Naive thymus-derived CD4-positive, alpha-beta T cell (primary cell): ENCODE measurements at regions of chr2 and their contacts with region 1.

Region 1: DNA sequence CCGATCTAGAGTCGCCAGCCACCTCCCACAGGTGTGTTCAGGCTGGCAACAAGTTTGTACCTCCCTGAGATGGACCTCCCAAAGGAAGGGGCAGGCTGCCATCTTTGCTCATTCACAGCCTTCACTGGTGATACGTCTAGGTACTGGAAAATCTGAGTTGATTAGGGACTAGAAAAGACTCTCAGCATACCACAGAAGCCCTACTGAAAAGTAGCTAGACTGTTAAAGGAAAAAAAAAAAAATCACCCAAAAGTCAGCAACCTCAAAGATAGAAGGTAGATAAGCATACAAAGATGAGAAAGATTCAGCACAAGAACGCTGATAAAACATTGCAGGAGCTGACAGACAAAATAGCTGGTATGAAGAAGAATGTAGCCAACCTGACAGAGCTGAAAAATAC is 128.6 kb upstream of the WDR75 start:
- DNase-seq: peak in 3 of 9 donors; percentile 22 to 48 (median 39)
- ATAC-seq: peak; percentile 36
- H3K4me3 ChIP-seq: no peak overlapping the region
- H3K4me3 Mint-ChIP-seq: peak overlapping the region in 9 of 10 donors; percentile 36 to 75 (median 63)
- H3K27ac ChIP-seq: no peak overlapping the region
- H3K27ac Mint-ChIP-seq: peak overlapping the region; percentile 14 to 87 (median 74)
- H3K4me1 ChIP-seq: peaks cover 4 to 37% of the 10 kb centered on the region in 2 donors
- H3K4me1 Mint-ChIP-seq: peaks cover 10 to 75% (median 58%) of the 10 kb centered on the region in 7 donors
- H3K27me3 ChIP-seq: no peaks in the 10 kb centered on the region
- H3K27me3 Mint-ChIP-seq: no peaks in the 10 kb centered on the region

Region 2: GRCh38 chr2:189302274-189302948 is 10.2 kb before region 1 on chr2:
- CTCF ChIA-PET with region 1: interaction called, 3 read pairs
- POLR2A ChIA-PET with region 1: interaction called, 3 read pairs
- intact Hi-C with region 1: loop called in 1 of 2 experiments (anchors 1 kb)
- DNase-seq: no peak
- ATAC-seq: no peak
- H3K4me3 ChIP-seq: no peak overlapping the region
- H3K4me3 Mint-ChIP-seq: peak overlapping the region in 8 of 10 donors; percentile 4 to 74 (median 60)
- H3K27ac ChIP-seq: no peak overlapping the region
- H3K27ac Mint-ChIP-seq: peak overlapping the region in 8 of 9 donors; percentile 25 to 95 (median 70)
- H3K4me1 ChIP-seq: peaks cover 56 to 88% of the 10 kb centered on the region in 2 donors
- H3K4me1 Mint-ChIP-seq: peaks cover 57 to 96% (median 91%) of the 10 kb centered on the region in 7 donors
- H3K27me3 ChIP-seq: no peaks in the 10 kb centered on the region
- H3K27me3 Mint-ChIP-seq: no peaks in the 10 kb centered on the region

Region 3: DNA sequence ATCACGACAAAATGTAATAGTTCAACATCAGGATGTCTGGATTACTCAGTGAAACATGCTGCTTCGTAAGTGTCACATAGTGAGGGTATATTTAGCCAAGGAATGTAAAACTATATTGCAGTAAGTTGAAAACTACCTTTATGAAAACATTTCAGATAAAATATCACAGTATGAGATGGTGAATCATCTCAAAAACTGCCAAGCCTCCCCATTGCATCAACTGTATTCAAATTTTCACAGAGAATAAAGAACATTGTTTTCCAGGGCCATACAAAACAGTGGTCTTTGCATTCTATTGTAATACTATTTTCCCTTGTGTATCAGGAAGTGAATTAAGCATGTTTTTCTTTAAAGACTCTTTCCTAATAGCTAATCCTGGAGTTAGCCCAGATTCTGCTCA is 797.5 kb after region 1 on chr2:
- CTCF ChIA-PET with region 1: no interaction called
- POLR2A ChIA-PET with region 1: no interaction called
- intact Hi-C with region 1: no loop called
- DNase-seq: no peak
- ATAC-seq: no peak
- H3K4me3 ChIP-seq: no peak overlapping the region
- H3K4me3 Mint-ChIP-seq: no peak overlapping the region
- H3K27ac ChIP-seq: no peak overlapping the region
- H3K27ac Mint-ChIP-seq: no peak overlapping the region
- H3K4me1 ChIP-seq: no peaks in the 10 kb centered on the region
- H3K4me1 Mint-ChIP-seq: no peaks in the 10 kb centered on the region
- H3K27me3 ChIP-seq: no peaks in the 10 kb centered on the region
- H3K27me3 Mint-ChIP-seq: peaks cover 0 to 14% (median 0%) of the 10 kb centered on the region in 5 donors